Posterior vena cava (tissue), 2 donors: ENCODE measurements at regions of chr5 and their contacts with region 1.

Region 1: DNA sequence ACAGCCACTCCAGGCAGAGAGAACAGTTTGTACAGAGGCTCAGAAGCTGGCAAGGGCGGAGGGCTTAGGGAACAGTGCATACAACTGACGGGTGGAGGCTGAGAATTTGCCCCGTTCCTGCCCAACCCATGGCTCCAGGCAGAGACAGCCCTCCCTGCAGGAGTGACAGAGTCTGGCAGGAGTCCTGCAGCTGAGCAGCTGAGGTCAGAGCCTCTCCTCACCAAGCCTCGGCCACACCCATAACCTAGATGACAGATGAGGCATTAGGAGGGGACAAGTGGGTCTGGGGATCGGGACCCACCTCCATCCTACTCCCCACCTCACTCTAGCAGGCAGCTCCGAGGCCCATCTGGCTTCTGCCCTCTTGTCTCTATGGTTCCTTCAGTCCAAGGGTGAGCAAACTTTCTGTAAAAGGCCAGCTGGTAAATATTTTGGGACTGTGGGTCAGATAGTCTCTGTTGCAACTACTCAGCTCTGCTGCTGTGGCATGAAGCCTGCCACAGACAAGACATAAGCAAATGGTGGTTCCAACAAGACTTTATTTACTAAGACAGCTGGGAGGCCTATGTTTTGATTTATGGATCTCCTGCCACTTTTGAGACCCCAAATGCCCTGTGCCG is 83.6 kb downstream of the SH3TC2 start:
- DNase-seq: no peak

Region 2: GRCh38 chr5:148849461-148849860 is 129.8 kb before region 1 on chr5:
- intact Hi-C with region 1: no loop called
- DNase-seq: no peak

Region 3: GRCh38 chr5:148998174-148998797 is 19.1 kb after region 1 on chr5:
- intact Hi-C with region 1: loop called in 1 of 2 experiments (anchors 1 kb)
- DNase-seq: no peak